GM10248 (cell line): ENCODE measurements at regions of chr1 and their contacts with region 1.

Region 1: DNA sequence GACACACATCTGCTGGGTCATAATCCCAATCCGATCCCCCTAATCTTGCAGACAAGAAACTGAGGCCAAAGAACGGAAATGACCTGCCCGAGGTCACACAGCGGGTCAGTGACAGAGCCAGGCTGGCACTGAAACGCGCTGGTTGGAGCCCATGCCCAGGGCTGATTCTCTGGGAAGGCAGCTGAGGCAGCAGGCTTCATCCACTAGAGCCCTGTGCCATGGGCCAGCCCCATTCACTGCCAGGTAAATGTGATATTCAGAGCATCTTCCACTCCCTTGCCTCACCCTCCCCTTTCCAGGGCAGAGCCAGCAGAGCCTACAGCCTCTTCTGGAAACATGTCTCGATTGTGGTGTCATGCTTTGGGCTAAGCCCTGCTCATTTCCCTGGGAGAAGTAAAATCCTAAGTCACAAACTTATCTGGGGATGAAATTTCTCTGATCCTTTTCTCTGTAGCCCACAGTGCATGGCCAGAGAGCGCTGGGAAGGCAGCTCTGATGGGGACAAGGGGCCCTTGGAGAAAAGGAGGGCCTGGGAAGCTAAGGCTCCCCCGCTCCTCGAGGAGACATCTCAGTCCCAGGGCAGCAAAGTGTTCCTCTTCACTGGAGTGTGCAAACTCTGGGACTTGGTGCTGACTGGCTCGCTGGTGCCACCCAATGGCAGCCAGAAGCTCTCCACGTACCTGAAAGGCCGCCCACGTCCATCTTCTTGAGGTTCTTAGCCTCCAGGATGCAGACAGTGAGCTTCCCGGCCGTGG is 110.4 kb downstream of the SYT2 start:
- DNase-seq: peak; percentile 85
- CTCF ChIP-seq: peak; percentile 88

Region 2: GRCh38 chr1:202462342-202463076 is 137.3 kb before region 1 on chr1:
- CTCF ChIA-PET with region 1: interaction called, 10 read pairs
- POLR2A ChIA-PET with region 1: no interaction called
- DNase-seq: no peak
- CTCF ChIP-seq: no peak

Region 3: DNA sequence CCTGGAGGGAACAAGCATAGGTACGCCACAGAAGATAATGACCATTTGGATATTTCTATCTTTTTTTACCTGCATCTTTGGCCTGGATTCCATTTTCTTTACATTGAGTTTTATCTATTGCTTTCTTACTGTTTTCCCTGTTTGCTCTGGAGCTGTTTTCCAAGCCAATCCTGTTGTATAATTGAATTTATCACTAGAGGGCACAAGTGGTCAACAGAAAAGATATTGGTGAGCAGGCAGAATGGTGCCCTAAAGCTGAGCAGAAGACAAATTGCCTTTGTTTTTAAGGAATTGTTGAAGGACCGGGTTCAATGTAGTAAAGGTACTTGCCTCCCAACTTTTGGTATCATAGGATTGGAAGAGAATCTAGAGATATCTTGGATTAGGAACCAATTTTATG is 98.6 kb before region 1 on chr1:
- CTCF ChIA-PET with region 1: interaction called, 10 read pairs
- POLR2A ChIA-PET with region 1: no interaction called
- DNase-seq: peak; percentile 7
- CTCF ChIP-seq: peak; percentile 44

Region 4: DNA sequence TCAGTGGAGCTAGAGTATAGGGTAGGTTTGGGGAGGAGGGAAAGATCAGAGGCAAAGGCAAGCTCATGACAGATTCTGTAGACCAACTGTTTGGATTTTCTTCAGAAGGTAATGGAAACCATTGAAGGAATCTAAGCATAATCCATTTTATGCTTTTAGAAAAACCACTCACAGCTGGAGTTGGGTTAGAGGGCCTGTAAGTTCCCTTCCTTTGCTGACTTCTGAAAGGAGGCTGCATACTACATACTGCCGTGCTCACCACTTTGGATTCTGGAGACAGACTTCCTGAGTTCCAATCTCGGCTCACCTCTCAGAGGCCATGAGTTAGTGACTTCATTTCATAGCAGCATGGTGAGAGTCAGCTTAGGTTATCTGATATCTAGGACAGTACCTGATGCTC is 116.8 kb after region 1 on chr1:
- CTCF ChIA-PET with region 1: interaction called, 13 read pairs
- POLR2A ChIA-PET with region 1: no interaction called
- DNase-seq: no peak
- CTCF ChIP-seq: no peak